HEK293 (cell line): ENCODE measurements at regions of chr15 and their contacts with region 1.

Region 1: GRCh38 chr15:45187894-45188830 is at the start of gene SHF:
- H3K4me3 ChIP-seq: peak within 1 kb of the TSS; percentile 41
- H3K27ac ChIP-seq: no peak within 1 kb of the TSS
- H3K4me1 ChIP-seq: no peaks in the 10 kb centered on the region; the same call in 1 of the 2 replicates
- CTCF ChIP-seq: no peak

Region 2: GRCh38 chr15:45198337-45199135 is 10.4 kb after region 1 on chr15:
- CTCF ChIA-PET with region 1: interaction called, 4 read pairs
- POLR2A ChIA-PET with region 1: interaction called, 11 read pairs
- H3K4me3 ChIP-seq: peak overlapping the region; percentile 90
- H3K27ac ChIP-seq: peak overlapping the region; percentile 28; the same call in 1 of the 2 replicates
- H3K4me1 ChIP-seq: no peaks in the 10 kb centered on the region
- CTCF ChIP-seq: peak; percentile 92